ENCODE measurements at regions of chr4 and their contacts with region 1.

Region 1: GRCh38 chr4:86924811-86925210 is 10.0 kb upstream of the AFF1 start:
- DNase-seq: no peak
- H3K4me3 ChIP-seq: no peak overlapping the region
- H3K27ac ChIP-seq: no peak overlapping the region
- H3K4me1 ChIP-seq: no peaks in the 10 kb centered on the region
- H3K27me3 ChIP-seq: no peaks in the 10 kb centered on the region
- CTCF ChIP-seq: no peak

Region 2: GRCh38 chr4:87093443-87094123 is 168.8 kb after region 1 on chr4:
- intact Hi-C with region 1: loop called (anchors 5 kb)
- DNase-seq: peak; percentile 48
- H3K4me3 ChIP-seq: no peak overlapping the region
- H3K27ac ChIP-seq: peak overlapping the region; percentile 34
- H3K4me1 ChIP-seq: no peaks in the 10 kb centered on the region
- H3K27me3 ChIP-seq: no peaks in the 10 kb centered on the region
- CTCF ChIP-seq: peak; percentile 48

Region 3: DNA sequence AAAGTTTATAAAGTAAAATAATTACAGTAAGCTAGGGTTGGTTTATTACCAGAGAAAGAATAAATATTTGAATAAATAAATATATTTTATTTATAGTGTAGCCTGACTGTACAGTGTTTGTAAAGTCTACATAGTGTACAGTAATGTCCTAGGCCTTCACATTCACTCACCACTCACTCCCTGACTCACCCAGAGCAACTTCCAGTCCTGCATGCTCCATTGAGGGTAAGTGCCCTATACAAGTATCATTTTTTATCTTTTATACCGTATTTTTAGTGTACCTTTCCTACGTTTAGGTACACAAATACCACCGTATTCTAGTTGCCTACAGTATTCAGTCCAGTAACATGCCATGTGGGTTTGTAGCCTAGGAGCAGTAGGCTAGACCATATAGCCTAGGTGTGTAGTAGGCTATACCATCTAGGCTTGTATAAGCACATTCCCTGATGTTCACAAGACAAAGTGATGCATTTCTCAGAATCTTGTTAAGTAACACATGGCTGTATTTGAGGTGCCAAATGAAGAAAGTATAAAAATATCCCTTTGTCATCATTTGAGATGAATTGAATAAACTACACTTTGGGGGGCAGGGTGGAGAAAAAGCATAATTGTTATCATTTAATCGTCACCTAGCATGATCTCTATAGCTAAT is 310.3 kb after region 1 on chr4:
- intact Hi-C with region 1: loop called (anchors 5 kb)
- DNase-seq: no peak
- H3K4me3 ChIP-seq: peak overlapping the region; percentile 42
- H3K27ac ChIP-seq: no peak overlapping the region
- H3K4me1 ChIP-seq: peaks cover 4% of the 10 kb centered on the region
- H3K27me3 ChIP-seq: no peaks in the 10 kb centered on the region
- CTCF ChIP-seq: no peak